Posterior vena cava (tissue), 2 donors: ENCODE measurements at regions of chr15 and their contacts with region 1.

Region 1: DNA sequence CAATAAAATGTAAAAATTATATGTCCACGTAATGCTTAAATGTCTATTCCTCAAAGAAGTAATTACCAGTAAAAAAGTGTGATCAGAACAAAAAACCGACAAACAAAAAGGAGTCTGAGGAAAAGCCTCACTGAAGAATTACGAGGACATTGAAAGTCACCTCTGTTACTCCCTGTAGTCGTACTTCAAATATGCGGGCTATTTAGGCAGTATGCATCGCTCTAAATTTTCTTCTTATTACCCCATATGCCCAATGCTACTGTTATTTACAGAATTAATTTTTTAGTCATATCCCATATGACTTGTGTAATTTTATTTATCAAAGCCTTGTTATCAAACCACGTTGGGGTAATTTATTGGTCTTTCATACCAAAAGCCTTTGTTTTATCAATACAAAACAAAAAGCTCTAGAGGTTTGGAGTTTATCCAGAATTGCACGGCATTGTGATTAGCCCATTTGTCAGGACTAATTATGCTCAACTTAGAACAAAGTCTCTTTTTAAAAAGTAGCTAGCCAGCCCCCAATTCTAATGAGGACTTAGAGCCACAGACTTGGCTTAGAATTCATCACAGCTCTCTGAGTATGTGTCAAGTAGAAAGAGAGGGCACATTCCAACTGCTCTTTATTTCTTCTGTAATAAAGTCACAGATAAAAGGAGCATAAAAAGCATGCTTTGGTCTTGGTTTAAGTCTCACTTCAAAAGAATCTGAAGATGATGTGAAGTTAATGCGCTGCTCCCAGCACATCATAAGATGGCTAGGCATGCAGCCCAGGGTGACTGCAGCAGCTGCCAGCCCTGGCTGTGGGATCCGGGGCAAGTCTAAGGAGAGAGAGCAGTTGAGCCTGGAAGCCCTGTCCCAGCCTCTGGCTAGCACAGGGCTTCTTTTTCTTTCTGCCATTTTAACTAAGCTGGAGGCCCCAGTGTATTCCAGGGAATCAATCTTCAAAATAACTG is 521.0 kb downstream of the GABRG3 start:
- DNase-seq: peak; percentile 78

Region 2: GRCh38 chr15:27479296-27480140 is 12.4 kb before region 1 on chr15:
- intact Hi-C with region 1: loop called in 1 of 2 experiments (anchors 1 kb)
- DNase-seq: no peak

Region 3: GRCh38 chr15:28132524-28133275 is 640.8 kb after region 1 on chr15:
- intact Hi-C with region 1: no loop called
- DNase-seq: no peak